Caco-2 (cell line): ENCODE measurements at regions of chr6 and their contacts with region 1.

Region 1: DNA sequence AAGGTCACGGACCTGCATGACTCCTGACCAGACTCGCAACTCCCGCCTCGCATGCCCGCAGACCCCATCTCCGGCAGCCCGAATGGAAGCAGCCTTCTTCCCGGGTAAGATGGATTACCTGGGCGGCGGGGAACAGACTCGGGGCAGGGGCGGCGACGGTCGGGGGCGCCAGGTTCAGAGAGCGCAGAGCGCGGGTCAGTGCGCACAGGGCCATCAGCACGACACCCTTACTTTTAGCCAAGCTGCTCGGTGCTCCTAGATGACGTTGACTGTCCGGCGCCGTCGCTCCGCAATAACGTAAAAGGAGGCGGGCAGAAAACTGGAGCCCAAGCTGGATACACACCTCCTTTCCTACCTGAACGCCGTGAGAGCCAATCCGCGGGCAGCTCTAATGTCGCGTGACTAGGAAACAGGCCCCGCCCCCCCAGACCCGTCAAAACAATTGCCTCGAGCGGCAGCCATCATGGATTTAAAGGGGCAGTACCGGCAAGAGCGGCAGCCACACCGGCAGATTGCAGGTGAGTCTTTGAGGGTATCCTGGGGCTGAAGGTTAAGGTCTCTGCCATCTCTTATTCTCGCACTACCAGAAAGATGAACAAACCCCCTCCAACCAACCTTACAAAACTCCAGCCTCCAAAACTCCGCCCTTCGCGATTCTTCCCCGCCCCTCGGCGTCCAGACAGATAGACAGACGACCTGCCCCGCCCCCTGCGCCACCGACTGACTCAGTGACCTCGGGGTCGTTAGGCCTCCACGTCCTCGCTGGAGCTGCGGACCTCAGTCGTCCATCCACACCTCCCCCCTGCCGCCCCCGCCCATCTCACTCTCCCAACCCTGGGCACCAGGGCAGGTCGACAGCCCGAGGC is at the starts of genes KLC4 and MRPL2:
- DNase-seq: peak; percentile 96 to 98
- H3K4me3 ChIP-seq: peak within 1 kb of the TSS; percentile 80
- H3K4me3 Mint-ChIP-seq: peak within 1 kb of the TSS; percentile 88
- H3K27ac Mint-ChIP-seq: peak within 1 kb of the TSS; percentile 82
- H3K4me1 ChIP-seq: peaks cover 29% of the 10 kb centered on the region
- H3K4me1 Mint-ChIP-seq: peaks cover 34% of the 10 kb centered on the region
- H3K27me3 ChIP-seq: no peaks in the 10 kb centered on the region
- H3K27me3 Mint-ChIP-seq: no peaks in the 10 kb centered on the region
- CTCF ChIP-seq: no peak
- total RNA-seq, gene KLC4: 47.7 and 52.7 TPM in 2 replicates
- total RNA-seq, gene MRPL2: 123 and 124 TPM in 2 replicates

Region 2: GRCh38 chr6:42984001-42984923 is 75.1 kb before region 1 on chr6 and contains the start of gene PPP2R5D:
- CTCF ChIA-PET with region 1: no interaction called
- POLR2A ChIA-PET with region 1: interaction called, 15 read pairs
- intact Hi-C with region 1: no loop called
- DNase-seq: peak; percentile 97
- H3K4me3 ChIP-seq: peak within 1 kb of the TSS; percentile 66
- H3K4me3 Mint-ChIP-seq: peak within 1 kb of the TSS; percentile 91
- H3K27ac Mint-ChIP-seq: peak within 1 kb of the TSS; percentile 87
- H3K4me1 ChIP-seq: no peaks in the 10 kb centered on the region
- H3K4me1 Mint-ChIP-seq: peaks cover 36% of the 10 kb centered on the region
- H3K27me3 ChIP-seq: no peaks in the 10 kb centered on the region
- H3K27me3 Mint-ChIP-seq: no peaks in the 10 kb centered on the region
- CTCF ChIP-seq: no peak
- total RNA-seq, gene PPP2R5D: 44.4 and 45.0 TPM in 2 replicates

Region 3: DNA sequence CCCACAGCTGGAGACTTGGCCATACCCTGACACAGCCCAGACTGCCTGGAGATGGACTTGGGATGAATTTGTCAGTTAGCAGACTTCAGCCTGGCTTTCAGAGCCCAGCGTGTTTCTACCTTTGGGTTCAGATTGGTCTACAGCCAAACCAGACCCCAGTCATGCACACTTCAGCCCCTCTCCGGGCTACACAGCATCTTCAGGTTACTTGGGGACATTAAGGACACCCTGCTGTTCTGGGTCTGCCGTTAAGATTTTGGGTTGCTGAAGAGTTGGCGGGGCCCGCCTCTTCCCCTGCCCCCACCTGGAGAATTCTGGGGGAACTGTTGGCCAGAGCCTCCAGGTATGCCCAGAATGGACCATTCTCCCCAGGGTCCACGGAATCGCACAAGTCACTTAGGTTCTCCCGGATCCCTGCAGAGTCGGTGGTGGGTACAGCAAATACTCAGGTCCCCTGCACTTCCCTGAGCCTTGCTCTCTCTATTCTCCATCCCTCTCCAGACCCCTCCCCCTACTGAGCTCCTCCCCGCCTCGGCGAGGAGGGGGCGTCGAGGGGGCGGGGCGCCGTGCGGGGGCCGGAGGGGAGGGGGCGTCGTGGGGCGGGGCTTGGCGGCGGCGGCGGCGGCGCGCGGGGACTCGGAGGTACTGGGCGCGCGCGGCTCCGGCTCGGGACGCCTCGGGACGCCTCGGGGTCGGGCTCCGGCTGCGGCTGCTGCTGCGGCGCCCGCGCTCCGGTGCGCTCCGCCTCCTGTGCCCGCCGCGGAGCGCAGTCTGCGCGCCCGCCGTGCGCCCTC is 16.5 kb after region 1 on chr6 and contains the start of gene PTK7:
- CTCF ChIA-PET with region 1: interaction called, 3 read pairs
- POLR2A ChIA-PET with region 1: interaction called, 11 read pairs
- intact Hi-C with region 1: no loop called
- DNase-seq: peak; percentile 78 to 87
- H3K4me3 ChIP-seq: peak within 1 kb of the TSS; percentile 95
- H3K4me3 Mint-ChIP-seq: peak within 1 kb of the TSS; percentile 78
- H3K27ac Mint-ChIP-seq: peak within 1 kb of the TSS; percentile 16
- H3K4me1 ChIP-seq: peaks cover 21% of the 10 kb centered on the region; the same call in 1 of the 2 replicates
- H3K4me1 Mint-ChIP-seq: peaks cover 10% of the 10 kb centered on the region
- H3K27me3 ChIP-seq: no peaks in the 10 kb centered on the region
- H3K27me3 Mint-ChIP-seq: no peaks in the 10 kb centered on the region
- CTCF ChIP-seq: no peak
- total RNA-seq, gene PTK7: 175 and 180 TPM in 2 replicates

Region 4: GRCh38 chr6:43089874-43090558 is 30.6 kb after region 1 on chr6:
- CTCF ChIA-PET with region 1: no interaction called
- POLR2A ChIA-PET with region 1: interaction called, 4 read pairs
- intact Hi-C with region 1: loop called (anchors 1 kb)
- DNase-seq: peak; percentile 83 to 87
- H3K4me3 ChIP-seq: no peak overlapping the region; the same call in none of the 2 replicates
- H3K4me3 Mint-ChIP-seq: peak overlapping the region; percentile 67
- H3K27ac Mint-ChIP-seq: peak overlapping the region; percentile 90
- H3K4me1 ChIP-seq: peaks cover 61% of the 10 kb centered on the region
- H3K4me1 Mint-ChIP-seq: peaks cover 32% of the 10 kb centered on the region
- H3K27me3 ChIP-seq: no peaks in the 10 kb centered on the region
- H3K27me3 Mint-ChIP-seq: no peaks in the 10 kb centered on the region
- CTCF ChIP-seq: no peak

Region 5: DNA sequence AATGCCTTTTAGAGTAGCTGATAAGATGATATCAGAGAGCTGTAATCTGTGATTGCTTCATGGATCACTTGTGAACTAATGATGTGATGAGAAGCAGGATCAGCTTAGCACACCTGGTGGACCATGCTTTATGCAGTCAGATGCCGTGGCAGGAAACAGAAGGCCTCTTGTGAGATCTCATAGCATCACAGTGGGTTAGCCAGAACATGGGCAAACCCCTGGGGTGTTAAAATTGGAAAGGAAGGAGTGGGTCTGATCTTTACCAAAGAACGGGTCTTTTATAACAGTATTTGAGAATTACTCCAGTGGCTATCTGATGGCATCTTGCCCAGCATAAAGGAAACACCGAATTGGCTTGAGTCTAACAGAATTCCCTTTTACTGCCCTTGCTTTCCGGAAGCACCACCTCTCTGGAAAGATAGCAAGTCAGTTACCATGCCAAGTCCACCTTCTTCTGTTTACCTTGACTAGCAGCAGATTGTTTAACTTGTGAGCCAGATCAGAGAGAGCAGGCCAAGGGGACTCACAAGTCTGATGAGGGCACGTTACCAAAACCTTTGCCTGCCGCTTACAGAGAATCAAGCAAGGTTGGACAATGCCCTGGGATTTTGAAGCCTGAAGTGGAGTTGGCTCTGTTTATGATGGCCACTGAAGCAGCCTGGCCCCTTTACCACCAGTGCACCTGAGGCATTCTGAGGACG is 90.8 kb after region 1 on chr6:
- CTCF ChIA-PET with region 1: no interaction called
- POLR2A ChIA-PET with region 1: no interaction called
- intact Hi-C with region 1: no loop called
- DNase-seq: no peak
- H3K4me3 ChIP-seq: no peak overlapping the region
- H3K4me3 Mint-ChIP-seq: no peak overlapping the region
- H3K27ac Mint-ChIP-seq: no peak overlapping the region
- H3K4me1 ChIP-seq: no peaks in the 10 kb centered on the region
- H3K4me1 Mint-ChIP-seq: no peaks in the 10 kb centered on the region
- H3K27me3 ChIP-seq: no peaks in the 10 kb centered on the region
- H3K27me3 Mint-ChIP-seq: no peaks in the 10 kb centered on the region
- CTCF ChIP-seq: no peak

Region 6: GRCh38 chr6:43516697-43517504 is 457.5 kb after region 1 on chr6 and contains the starts of genes POLR1C and YIPF3:
- CTCF ChIA-PET with region 1: no interaction called
- POLR2A ChIA-PET with region 1: no interaction called
- intact Hi-C with region 1: no loop called
- DNase-seq: peak; percentile 97
- H3K4me3 ChIP-seq: peak within 1 kb of the TSS; percentile 51
- H3K4me3 Mint-ChIP-seq: no peak within 1 kb of the TSS
- H3K27ac Mint-ChIP-seq: no peak within 1 kb of the TSS
- H3K4me1 ChIP-seq: 0 out of 2 replicates have a peak, but pooled peaks cover 7% of the 10 kb centered on the region
- H3K4me1 Mint-ChIP-seq: peaks cover 6% of the 10 kb centered on the region
- H3K27me3 ChIP-seq: no peaks in the 10 kb centered on the region
- H3K27me3 Mint-ChIP-seq: no peaks in the 10 kb centered on the region
- CTCF ChIP-seq: no peak
- total RNA-seq, gene POLR1C: 43.7 and 45.1 TPM in 2 replicates
- total RNA-seq, gene YIPF3: 83.3 and 99.8 TPM in 2 replicates